ENCODE measurements at regions of chr3 and their contacts with region 1.

Region 1: DNA sequence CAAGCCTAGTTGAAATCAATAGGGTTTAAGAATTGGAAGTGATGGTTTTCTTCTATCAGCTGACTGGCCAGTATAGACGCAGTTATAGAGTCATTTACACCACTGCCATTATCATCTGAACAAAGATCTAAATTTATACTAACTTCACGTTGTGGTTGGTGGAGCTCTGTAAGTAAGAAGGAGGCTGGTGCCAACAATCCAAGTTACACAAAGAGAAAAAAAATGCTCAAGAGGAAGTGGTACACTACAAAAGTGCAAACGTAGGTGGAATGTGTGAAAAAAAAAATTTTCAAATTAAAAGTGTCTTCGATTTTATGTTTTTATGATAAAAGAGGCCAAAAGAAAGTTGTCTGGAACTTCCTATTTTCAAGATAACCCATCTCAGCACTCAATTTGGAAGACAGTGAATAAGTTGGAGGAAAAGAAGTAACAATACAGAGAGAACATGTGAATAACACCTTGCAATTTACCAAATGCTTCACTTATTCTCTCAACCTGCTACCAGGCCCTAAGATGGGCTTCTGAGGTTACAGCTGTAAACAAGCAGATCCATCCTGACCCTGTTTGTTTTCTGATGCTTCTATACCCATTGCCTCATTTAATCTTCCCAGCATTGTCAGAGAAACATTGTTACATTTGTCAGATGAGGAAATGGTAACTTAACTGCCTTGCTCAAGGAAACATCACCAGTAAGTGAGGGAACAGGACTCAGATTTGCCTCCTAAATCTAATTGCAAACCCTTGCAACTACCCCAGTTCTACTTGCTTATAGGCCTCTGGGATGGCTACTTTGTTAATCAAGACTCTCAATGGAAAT is 12.0 kb upstream of the TASOR start:
- DNase-seq: no peak
- ATAC-seq: no peak
- H3K4me3 ChIP-seq: no peak overlapping the region
- H3K27ac ChIP-seq: no peak overlapping the region
- H3K4me1 ChIP-seq: peaks cover 7% of the 10 kb centered on the region
- CTCF ChIP-seq: no peak
- EP300 ChIP-seq: no peak
- POLR2A ChIP-seq: no peak
- RAD21 ChIP-seq: no peak

Region 2: GRCh38 chr3:56988458-56989168 is 293.5 kb after region 1 on chr3:
- CTCF ChIA-PET with region 1: interaction called, 184 read pairs
- POLR2A ChIA-PET with region 1: no interaction called
- DNase-seq: peak; percentile 43 to 67
- ATAC-seq: peak; percentile 82 to 92
- H3K4me3 ChIP-seq: no peak overlapping the region
- H3K27ac ChIP-seq: no peak overlapping the region
- H3K4me1 ChIP-seq: peaks cover 21% of the 10 kb centered on the region
- CTCF ChIP-seq: peak; percentile 86
- EP300 ChIP-seq: no peak
- POLR2A ChIP-seq: no peak
- RAD21 ChIP-seq: peak; percentile 85 to 91

Measured in A549 (cell line).